ENCODE measurements at regions of chr1 and their contacts with region 1.

Region 1: DNA sequence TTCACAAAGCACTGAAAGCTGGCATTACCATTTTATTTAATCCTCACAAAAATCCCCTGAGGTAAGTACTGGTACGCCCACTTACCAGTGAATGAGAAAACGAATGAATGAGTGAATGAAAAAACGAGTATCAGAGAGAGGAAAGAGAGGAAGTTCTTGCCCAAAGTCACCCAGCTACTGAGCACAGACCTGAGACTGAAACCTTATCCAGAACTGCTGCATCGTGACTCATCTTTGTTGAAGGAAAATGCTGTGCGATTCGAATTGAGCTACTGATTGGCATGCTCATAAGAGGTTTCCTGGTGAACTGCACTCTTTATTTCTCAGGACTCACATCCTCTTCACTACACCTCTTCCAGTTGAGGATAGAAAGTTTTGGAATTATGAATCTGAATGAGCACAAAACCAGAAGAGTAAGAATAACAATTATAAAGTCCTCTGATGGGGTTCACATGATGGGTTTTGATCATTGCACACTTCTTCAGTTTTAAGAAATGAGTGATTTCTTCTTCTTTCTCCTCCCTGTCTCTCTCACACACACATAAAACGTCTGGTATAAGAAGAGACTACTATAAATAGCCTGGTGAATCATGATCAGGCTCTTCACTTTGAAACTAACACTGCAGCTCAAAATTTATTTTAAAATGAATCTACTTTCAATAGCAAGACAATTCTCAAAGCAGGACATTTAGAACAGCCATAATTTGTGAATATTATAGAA is 32.1 kb downstream of the IL12RB2 start:
- DNase-seq: peak; percentile 67
- ATAC-seq: peak; percentile 67
- H3K4me3 Mint-ChIP-seq: peak overlapping the region; percentile 40
- H3K27ac Mint-ChIP-seq: peak overlapping the region; percentile 94
- H3K4me1 Mint-ChIP-seq: peaks cover 87% of the 10 kb centered on the region
- H3K27me3 Mint-ChIP-seq: no peaks in the 10 kb centered on the region

Region 2: GRCh38 chr1:67174716-67175284 is 165.0 kb before region 1 on chr1:
- CTCF ChIA-PET with region 1: interaction called, 7 read pairs
- POLR2A ChIA-PET with region 1: interaction called, 38 read pairs
- intact Hi-C with region 1: loop called (anchors 1 kb)
- DNase-seq: peak; percentile 61
- ATAC-seq: peak; percentile 70
- H3K4me3 Mint-ChIP-seq: peak overlapping the region; percentile 25
- H3K27ac Mint-ChIP-seq: peak overlapping the region; percentile 94
- H3K4me1 Mint-ChIP-seq: peaks cover 68% of the 10 kb centered on the region
- H3K27me3 Mint-ChIP-seq: no peaks in the 10 kb centered on the region

Region 3: GRCh38 chr1:67307251-67308060 is 32.3 kb before region 1 on chr1 and contains the start of gene IL12RB2:
- CTCF ChIA-PET with region 1: interaction called, 7 read pairs
- POLR2A ChIA-PET with region 1: interaction called, 16 read pairs
- intact Hi-C with region 1: loop called in 1 of 2 experiments (anchors 1 kb)
- DNase-seq: peak; percentile 77
- ATAC-seq: peak; percentile 77
- H3K4me3 Mint-ChIP-seq: peak within 1 kb of the TSS; percentile 83
- H3K27ac Mint-ChIP-seq: peak within 1 kb of the TSS; percentile 90
- H3K4me1 Mint-ChIP-seq: peaks cover 48% of the 10 kb centered on the region
- H3K27me3 Mint-ChIP-seq: no peaks in the 10 kb centered on the region
- total RNA-seq, gene IL12RB2: 77.9 to 99.2 TPM

Region 4: GRCh38 chr1:67314696-67315095 is 25.1 kb before region 1 on chr1:
- CTCF ChIA-PET with region 1: interaction called, 8 read pairs
- POLR2A ChIA-PET with region 1: interaction called, 7 read pairs
- intact Hi-C with region 1: loop called in 1 of 2 experiments (anchors 1 kb)
- DNase-seq: peak; percentile 38
- ATAC-seq: peak; percentile 76
- H3K4me3 Mint-ChIP-seq: peak overlapping the region; percentile 38
- H3K27ac Mint-ChIP-seq: peak overlapping the region; percentile 89
- H3K4me1 Mint-ChIP-seq: peaks cover 43% of the 10 kb centered on the region
- H3K27me3 Mint-ChIP-seq: no peaks in the 10 kb centered on the region

Region 5: DNA sequence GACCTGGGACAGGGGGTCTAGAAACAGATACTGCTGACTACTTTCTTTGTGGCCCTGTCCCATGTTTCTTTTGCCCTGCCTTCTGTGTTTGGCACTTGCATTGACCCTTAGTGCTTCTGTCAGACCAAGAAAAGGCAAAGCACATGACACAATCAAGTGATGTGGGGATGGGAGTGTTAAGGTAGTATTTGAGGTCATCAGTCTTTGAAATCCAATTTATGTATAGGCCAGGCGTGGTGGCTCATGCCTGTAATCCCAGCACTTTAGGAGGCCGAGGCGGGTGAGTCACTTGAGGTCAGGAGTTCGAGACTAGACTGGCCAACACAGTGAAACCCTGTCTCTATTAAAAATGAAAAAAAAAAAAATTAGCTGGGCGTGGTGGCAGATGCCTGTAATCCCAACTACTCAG is 64.4 kb after region 1 on chr1:
- CTCF ChIA-PET with region 1: no interaction called
- POLR2A ChIA-PET with region 1: interaction called, 4 read pairs
- intact Hi-C with region 1: loop called in 1 of 2 experiments (anchors 5 kb)
- DNase-seq: no peak
- ATAC-seq: no peak
- H3K4me3 Mint-ChIP-seq: no peak overlapping the region
- H3K27ac Mint-ChIP-seq: no peak overlapping the region
- H3K4me1 Mint-ChIP-seq: peaks cover 19% of the 10 kb centered on the region
- H3K27me3 Mint-ChIP-seq: no peaks in the 10 kb centered on the region

Region 6: DNA sequence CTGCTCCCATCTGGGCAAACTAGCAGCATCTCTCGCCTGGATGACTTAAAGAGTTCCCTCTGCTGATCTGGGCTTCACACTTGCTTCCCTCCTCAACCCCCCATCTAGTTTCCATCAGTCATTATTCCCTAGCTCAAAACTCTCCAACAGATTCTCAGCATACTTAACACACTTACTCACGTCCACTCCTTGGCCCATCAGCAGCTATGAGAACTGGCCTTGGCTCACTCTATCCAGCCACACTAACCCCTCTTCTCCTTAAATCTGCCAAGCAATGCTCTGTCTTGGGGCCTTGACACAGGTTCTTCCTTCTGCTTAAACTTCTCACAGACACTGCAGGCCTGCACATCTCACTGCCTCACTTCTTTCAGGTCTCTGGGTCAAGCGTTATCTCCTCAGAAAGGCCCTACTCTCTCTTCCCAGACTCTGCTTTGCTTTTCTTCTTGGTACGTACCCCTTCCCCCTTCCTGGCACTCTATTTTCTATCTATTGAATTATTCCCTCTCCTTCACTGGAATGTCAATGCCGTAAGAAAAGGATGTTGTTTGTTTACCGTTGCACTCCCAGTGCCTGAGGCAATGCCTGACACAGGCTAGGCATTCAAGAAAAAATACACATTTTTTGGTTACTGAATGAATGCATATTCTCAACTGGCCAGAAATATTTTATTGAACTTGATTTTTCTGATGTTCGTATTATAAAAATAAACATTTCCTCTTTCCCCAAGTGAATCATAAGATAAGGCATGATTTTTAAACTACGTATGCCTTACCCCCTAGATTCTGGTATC is 452.1 kb after region 1 on chr1:
- CTCF ChIA-PET with region 1: no interaction called
- POLR2A ChIA-PET with region 1: no interaction called
- intact Hi-C with region 1: no loop called
- DNase-seq: no peak
- ATAC-seq: no peak
- H3K4me3 Mint-ChIP-seq: no peak overlapping the region
- H3K27ac Mint-ChIP-seq: no peak overlapping the region
- H3K4me1 Mint-ChIP-seq: no peaks in the 10 kb centered on the region
- H3K27me3 Mint-ChIP-seq: peaks cover 6% of the 10 kb centered on the region